Esophagus muscularis mucosa (tissue), 4 donors: ENCODE measurements at regions of chr3 and their contacts with region 1.

Region 1: DNA sequence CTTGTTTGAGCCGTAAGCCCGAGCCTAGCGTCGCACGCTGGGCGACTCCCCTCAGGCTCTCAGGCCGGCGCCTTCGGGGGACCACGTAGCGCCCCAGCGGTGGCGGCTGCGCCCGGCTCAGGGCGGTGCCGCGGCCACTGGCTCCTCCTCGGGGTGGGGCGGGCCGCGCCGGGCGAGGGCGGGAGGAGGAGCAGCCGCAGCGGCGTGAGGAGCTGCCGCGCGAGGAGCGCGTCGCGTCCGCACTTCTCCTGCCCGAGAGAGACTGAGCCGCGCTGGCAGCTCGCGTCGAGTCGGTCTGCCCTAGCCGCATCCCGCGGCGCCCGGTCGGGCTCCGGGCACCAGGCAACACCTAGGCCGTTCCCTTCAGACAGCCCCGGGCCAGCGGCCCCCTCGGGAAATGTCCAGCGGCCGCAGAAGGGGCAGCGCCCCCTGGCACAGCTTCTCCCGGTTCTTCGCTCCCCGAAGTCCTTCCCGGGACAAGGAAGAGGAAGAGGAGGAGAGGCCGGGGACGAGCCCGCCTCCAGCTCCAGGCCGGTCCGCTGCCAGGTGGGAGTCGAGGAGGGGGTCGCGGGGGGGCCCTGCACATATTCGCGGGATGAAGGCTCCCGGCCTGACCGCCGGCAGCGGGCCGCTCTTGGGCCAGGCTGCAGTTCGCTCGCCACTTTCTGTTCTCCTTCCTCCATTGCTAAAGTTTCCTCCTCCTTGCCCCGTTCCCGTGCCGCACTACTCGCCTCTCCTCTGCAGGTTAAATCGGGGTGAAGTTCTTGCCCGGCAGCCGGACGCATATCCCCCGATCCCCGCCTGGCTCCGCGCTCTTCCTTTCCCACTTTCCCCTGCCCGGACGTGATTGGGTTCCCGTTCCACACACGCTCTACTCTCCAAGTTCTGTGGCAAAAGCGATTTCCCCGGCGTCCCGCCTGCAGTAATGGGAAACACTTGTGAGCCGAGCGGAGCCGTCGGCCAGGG is at the start of gene CRYBG3:
- DNase-seq: peak; percentile 93
- H3K4me3 ChIP-seq: peak within 1 kb of the TSS; percentile 66 to 95 (median 87)
- H3K27ac ChIP-seq: peak within 1 kb of the TSS; percentile 81 to 95 (median 88)
- H3K4me1 ChIP-seq: peaks cover 23 to 40% (median 32%) of the 10 kb centered on the region in 4 donors
- H3K27me3 ChIP-seq: no peaks in the 10 kb centered on the region
- CTCF ChIP-seq: peak in 1 of 3 experiments; percentile 2
- EP300 ChIP-seq: no peak
- POLR2A ChIP-seq: no peak
- total RNA-seq, gene CRYBG3: 18.7 to 23.5 (median 21.1) TPM

Region 2: GRCh38 chr3:96996009-96996408 is 826.1 kb before region 1 on chr3:
- intact Hi-C with region 1: no loop called
- DNase-seq: no peak
- H3K4me3 ChIP-seq: no peak overlapping the region
- H3K27ac ChIP-seq: no peak overlapping the region
- H3K4me1 ChIP-seq: peaks cover 0 to 4% (median 0%) of the 10 kb centered on the region in 4 donors
- H3K27me3 ChIP-seq: no peaks in the 10 kb centered on the region
- CTCF ChIP-seq: no peak
- EP300 ChIP-seq: no peak
- POLR2A ChIP-seq: no peak

Region 3: GRCh38 chr3:97971677-97972567 is 149.8 kb after region 1 on chr3 and contains the start of gene RIOX2:
- intact Hi-C with region 1: loop called (anchors 10 kb)
- DNase-seq: no peak
- H3K4me3 ChIP-seq: peak within 1 kb of the TSS; percentile 85 to 92 (median 89)
- H3K27ac ChIP-seq: peak within 1 kb of the TSS; percentile 83 to 91 (median 86)
- H3K4me1 ChIP-seq: peaks cover 12 to 35% (median 27%) of the 10 kb centered on the region in 4 donors
- H3K27me3 ChIP-seq: no peaks in the 10 kb centered on the region
- CTCF ChIP-seq: peak in 2 of 3 experiments; percentile 11 to 16
- EP300 ChIP-seq: no peak
- POLR2A ChIP-seq: peak; percentile 56
- total RNA-seq, gene RIOX2: 19.5 to 24.2 (median 21.7) TPM

Region 4: DNA sequence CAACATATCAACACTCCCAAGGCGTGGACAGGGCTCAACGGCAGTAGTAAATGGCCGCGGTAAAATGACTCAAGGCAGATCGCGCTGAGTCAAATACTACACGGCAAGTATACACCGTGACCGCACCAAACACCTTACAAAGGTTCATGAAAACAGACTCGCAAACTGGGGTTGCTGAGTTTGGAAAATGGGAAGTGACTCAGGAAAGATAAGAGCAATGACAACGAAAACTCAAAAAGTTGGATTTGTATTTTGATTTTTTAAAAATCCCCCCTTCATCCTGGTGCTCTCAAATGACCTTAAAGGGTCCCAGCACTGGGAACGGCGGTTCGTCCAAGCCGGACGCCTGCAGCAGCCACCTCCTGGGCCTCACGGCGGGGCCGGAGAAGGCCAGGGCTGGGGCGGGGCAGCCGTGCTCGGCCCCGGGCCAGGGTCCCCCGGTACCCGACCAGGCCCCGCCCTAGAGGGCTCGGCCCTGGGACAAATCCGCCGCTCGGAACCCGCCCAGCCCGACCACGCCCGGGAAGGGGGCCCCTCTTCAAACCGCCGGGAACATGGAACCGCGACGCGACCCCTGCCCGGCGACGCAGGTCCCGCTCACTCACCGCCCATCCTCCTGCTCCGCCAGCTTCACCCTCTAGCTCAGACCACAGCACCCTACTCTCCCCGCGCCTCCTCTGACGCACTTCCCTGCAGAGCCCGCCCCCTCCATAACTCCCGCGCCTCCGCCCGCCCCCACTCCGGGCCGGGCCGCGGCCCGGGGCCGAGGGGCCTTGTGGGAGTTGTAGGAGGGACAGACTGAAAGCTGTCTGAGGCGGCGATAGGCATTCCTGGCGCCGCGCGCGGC is 700.4 kb after region 1 on chr3 and contains the start of gene CLDND1:
- intact Hi-C with region 1: loop called (anchors 10 kb)
- DNase-seq: peak; percentile 99
- H3K4me3 ChIP-seq: peak within 1 kb of the TSS; percentile 80 to 92 (median 84)
- H3K27ac ChIP-seq: peak within 1 kb of the TSS; percentile 92 to 99 (median 94)
- H3K4me1 ChIP-seq: peaks cover 11 to 46% (median 33%) of the 10 kb centered on the region in 4 donors
- H3K27me3 ChIP-seq: no peaks in the 10 kb centered on the region
- CTCF ChIP-seq: no peak
- EP300 ChIP-seq: no peak
- POLR2A ChIP-seq: peak; percentile 65
- total RNA-seq, gene CLDND1: 84.6 to 191 (median 139) TPM